CD4-positive, alpha-beta T cell (primary cell): ENCODE measurements at regions of chr18 and their contacts with region 1.

Region 1: GRCh38 chr18:65620076-65620696 is 130.6 kb upstream of the CDH7 start:
- DNase-seq: no peak
- ATAC-seq: no peak
- H3K4me3 ChIP-seq: no peak overlapping the region
- H3K4me3 Mint-ChIP-seq: no peak overlapping the region
- H3K27ac ChIP-seq: no peak overlapping the region
- H3K27ac Mint-ChIP-seq: no peak overlapping the region
- H3K4me1 ChIP-seq: no peaks in the 10 kb centered on the region
- H3K4me1 Mint-ChIP-seq: no peaks in the 10 kb centered on the region
- H3K27me3 ChIP-seq: no peaks in the 10 kb centered on the region
- H3K27me3 Mint-ChIP-seq: no peaks in the 10 kb centered on the region
- CTCF ChIP-seq: no peak

Region 2: DNA sequence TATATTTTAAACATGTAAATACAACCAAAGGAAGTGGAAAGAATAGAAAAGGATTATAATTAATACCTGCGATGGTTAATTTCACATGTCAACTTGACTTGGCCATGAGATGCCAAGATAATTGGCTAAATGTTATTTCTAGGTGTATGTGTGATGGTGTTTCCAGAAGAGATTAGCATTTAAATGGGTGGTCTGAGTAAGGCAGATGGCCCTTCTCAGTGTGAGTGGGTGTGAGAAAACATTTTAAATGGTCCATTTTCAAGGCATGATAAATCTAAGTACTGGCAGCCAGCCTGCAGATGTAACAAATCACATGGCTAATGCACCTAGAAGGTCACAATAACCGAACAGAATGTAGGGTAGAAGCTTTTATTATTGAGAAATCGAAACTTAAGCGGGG is 31.0 kb after region 1 on chr18:
- CTCF ChIA-PET with region 1: no interaction called
- POLR2A ChIA-PET with region 1: no interaction called
- intact Hi-C with region 1: loop called in 1 of 2 experiments (anchors 1 kb)
- DNase-seq: no peak
- ATAC-seq: no peak
- H3K4me3 ChIP-seq: no peak overlapping the region
- H3K4me3 Mint-ChIP-seq: no peak overlapping the region
- H3K27ac ChIP-seq: no peak overlapping the region
- H3K27ac Mint-ChIP-seq: no peak overlapping the region
- H3K4me1 ChIP-seq: no peaks in the 10 kb centered on the region
- H3K4me1 Mint-ChIP-seq: no peaks in the 10 kb centered on the region
- H3K27me3 ChIP-seq: no peaks in the 10 kb centered on the region
- H3K27me3 Mint-ChIP-seq: no peaks in the 10 kb centered on the region
- CTCF ChIP-seq: no peak